Activated T-helper 2 cell treated with anti-CD3 and anti-CD28 coated beads, Interferon-gamma antibody, Interleukin-2, Interleukin-4, amounts not matched to agents 10 μg/mL and 5 μg/mL and 100 μg/mL, durations not matched to agents 14 hours and 24 hours and 36 hours (primary cell): ENCODE measurements at regions of chr14 and their contacts with region 1.

Region 1: GRCh38 chr14:68862954-68863594 is 70.2 kb upstream of the ZFP36L1 start:
- DNase-seq: peak; percentile 53
- H3K4me3 Mint-ChIP-seq: no peak overlapping the region
- H3K27ac Mint-ChIP-seq: no peak overlapping the region
- H3K4me1 Mint-ChIP-seq: peaks cover 2% of the 10 kb centered on the region
- H3K27me3 Mint-ChIP-seq: no peaks in the 10 kb centered on the region

Region 2: DNA sequence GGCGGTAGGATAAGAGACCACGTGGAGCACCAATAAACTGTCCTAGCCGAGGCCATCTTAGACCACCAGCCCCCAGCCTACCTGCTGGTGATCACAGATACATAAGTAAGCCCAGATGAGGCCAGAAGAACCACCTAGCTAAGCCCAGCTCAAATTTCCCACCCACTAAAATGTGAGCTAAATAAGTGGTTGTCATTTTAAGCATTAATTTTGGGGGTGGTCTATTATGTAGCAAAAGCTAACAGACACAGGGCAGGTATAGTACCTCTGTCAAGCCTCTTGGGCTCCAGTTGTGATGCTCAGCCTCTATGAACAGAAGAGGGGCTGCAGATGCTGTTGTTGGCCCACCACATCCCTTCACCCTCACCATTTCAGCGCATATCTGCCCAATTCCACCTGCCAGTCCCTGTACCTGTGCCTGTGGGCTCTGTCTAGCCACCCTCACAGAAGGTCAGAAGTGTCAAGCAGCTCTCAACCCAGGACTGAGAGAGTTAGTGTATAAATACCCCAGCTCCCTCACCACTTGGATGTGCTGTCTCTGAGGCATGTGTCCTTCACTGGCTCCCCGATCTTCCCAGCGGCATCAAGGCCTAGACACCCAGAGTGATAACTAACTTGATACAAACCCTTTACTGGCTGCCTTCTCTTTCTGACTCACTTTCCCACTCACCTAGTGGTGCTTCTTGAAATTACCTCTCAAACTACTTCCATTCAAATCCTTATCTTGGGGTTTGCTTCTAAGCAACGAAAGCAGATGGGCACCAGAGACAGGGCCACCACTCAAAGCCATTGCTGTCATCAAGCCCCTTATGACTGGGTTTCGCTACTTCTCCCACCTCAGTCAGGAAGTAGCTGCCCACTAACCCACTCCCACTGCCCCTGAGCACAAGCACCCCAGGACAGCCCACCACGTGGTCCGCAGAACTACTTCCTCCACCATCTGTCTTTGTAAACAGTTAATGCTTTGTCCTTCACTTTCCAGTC is 87.6 kb before region 1 on chr14:
- intact Hi-C with region 1: no loop called
- DNase-seq: no peak
- H3K4me3 Mint-ChIP-seq: no peak overlapping the region
- H3K27ac Mint-ChIP-seq: no peak overlapping the region
- H3K4me1 Mint-ChIP-seq: peaks cover 45% of the 10 kb centered on the region
- H3K27me3 Mint-ChIP-seq: no peaks in the 10 kb centered on the region

Region 3: GRCh38 chr14:69107407-69108003 is 244.4 kb after region 1 on chr14:
- intact Hi-C with region 1: loop called (anchors 1 kb)
- DNase-seq: no peak
- H3K4me3 Mint-ChIP-seq: no peak overlapping the region
- H3K27ac Mint-ChIP-seq: no peak overlapping the region
- H3K4me1 Mint-ChIP-seq: peaks cover under 1% of the 10 kb centered on the region
- H3K27me3 Mint-ChIP-seq: no peaks in the 10 kb centered on the region

Region 4: GRCh38 chr14:69335371-69335771 is 472.3 kb after region 1 on chr14:
- intact Hi-C with region 1: no loop called
- DNase-seq: no peak
- H3K4me3 Mint-ChIP-seq: no peak overlapping the region
- H3K27ac Mint-ChIP-seq: no peak overlapping the region
- H3K4me1 Mint-ChIP-seq: no peaks in the 10 kb centered on the region
- H3K27me3 Mint-ChIP-seq: peaks cover 3% of the 10 kb centered on the region